ENCODE measurements at regions of chr1 and their contacts with region 1.

Region 1: DNA sequence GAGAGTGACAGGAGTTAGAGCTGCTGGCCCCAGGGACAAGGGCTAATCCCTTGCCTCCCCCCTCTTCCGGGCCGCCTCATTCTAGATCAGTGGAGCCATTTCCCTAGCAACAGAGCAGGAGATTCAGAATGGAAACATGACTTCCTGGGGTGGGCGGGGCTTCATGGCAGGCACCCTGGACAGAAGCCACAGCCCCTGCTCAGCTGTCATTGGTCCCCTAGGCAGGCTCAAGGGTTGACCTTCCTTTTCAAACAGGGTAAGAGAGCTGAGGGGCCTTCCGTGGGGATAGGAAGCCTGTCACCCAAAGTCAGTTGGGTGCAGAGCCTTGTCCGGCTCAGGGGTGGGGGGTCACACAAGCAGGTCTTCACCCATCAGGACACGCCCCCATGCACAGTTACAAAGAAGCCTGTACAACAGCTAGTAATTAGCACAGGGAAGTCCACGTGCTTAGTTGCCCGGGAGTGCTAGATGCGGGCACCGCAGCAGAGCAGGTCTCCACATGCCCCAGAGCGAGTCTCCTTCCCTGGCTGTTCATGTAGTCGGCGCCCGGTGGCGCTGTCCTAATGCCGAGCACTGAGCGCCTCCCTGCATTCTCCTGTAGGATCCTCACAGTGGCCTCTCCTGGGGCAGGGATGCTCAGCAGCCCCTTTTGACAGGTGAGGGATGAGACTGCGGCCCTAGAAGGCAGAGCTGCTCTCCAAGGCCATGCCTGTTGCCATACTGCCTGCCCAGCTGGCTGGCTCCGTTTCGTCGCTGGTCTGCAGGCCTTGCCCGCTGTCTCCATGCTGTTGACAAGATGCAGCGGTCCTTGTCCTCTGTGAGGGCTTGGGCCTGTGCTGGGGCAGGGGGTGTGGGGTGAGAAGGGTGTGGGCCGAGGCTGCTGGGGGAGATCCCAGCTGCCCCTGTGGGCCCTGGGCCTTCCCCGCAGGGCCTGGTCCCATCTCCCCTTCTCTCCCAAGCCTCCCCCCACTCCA is 5.1 kb downstream of the TMEM201 start:
- DNase-seq: peak; percentile 93
- H3K4me3 ChIP-seq: no peak overlapping the region; a peak in 1 of 4 replicates
- H3K27ac ChIP-seq: peak overlapping the region; percentile 45 to 93
- H3K4me1 ChIP-seq: peaks cover 26 to 76% of the 10 kb centered on the region in 2 experiments; a peak in 3 of 4 replicates
- H3K27me3 ChIP-seq: no peaks in the 10 kb centered on the region
- CTCF ChIP-seq: no peak
- EP300 ChIP-seq: 0 out of 4 replicates have a peak, but pooled peaks of 1 of the 2 experiments have one; percentile 25
- RAD21 ChIP-seq: no peak

Region 2: DNA sequence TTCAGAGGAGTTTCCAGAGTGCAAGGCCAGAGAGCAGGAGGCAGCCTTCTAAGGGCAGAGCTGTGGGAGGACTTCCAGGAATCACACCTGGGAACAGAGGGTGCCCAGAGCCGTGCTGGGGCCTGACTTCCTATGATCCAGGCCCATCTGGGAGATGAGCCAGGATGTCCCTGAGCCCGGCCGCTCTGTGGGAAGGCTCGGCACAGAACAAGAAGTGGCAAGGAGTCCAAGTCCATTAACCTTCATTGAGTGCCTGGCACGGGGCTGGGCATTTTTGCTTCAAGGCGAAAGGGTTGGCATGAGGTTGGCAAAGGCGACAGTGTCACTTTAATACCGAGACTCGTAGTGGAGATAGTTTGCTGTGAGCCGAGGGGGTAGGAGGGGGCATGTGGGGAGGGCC is 13.2 kb after region 1 on chr1:
- CTCF ChIA-PET with region 1: interaction called, 51 read pairs
- POLR2A ChIA-PET with region 1: interaction called, 8 read pairs
- DNase-seq: no peak
- H3K4me3 ChIP-seq: no peak overlapping the region
- H3K27ac ChIP-seq: peak overlapping the region in 1 of 2 experiments; percentile 77; a peak in 1 of 4 replicates
- H3K4me1 ChIP-seq: peaks cover 0 to 54% of the 10 kb centered on the region in 2 experiments; a peak in 2 of 4 replicates
- H3K27me3 ChIP-seq: no peaks in the 10 kb centered on the region
- CTCF ChIP-seq: no peak
- EP300 ChIP-seq: no peak
- RAD21 ChIP-seq: no peak